Heart right ventricle (tissue), 16 donors: ENCODE measurements at regions of chr17 and their contacts with region 1.

Region 1: GRCh38 chr17:8300627-8301242 is 5.5 kb upstream of the SLC25A35 start:
- DNase-seq: peak; percentile 38 to 45
- ATAC-seq: peak; percentile 65 to 93 (median 91)
- H3K4me3 ChIP-seq: no peak overlapping the region
- H3K27ac ChIP-seq: no peak overlapping the region
- H3K4me1 ChIP-seq: peaks cover 0 to 13% (median 3%) of the 10 kb centered on the region in 9 donors
- H3K27me3 ChIP-seq: no peaks in the 10 kb centered on the region
- CTCF ChIP-seq: peak; percentile 76 to 90 (median 85)

Region 2: DNA sequence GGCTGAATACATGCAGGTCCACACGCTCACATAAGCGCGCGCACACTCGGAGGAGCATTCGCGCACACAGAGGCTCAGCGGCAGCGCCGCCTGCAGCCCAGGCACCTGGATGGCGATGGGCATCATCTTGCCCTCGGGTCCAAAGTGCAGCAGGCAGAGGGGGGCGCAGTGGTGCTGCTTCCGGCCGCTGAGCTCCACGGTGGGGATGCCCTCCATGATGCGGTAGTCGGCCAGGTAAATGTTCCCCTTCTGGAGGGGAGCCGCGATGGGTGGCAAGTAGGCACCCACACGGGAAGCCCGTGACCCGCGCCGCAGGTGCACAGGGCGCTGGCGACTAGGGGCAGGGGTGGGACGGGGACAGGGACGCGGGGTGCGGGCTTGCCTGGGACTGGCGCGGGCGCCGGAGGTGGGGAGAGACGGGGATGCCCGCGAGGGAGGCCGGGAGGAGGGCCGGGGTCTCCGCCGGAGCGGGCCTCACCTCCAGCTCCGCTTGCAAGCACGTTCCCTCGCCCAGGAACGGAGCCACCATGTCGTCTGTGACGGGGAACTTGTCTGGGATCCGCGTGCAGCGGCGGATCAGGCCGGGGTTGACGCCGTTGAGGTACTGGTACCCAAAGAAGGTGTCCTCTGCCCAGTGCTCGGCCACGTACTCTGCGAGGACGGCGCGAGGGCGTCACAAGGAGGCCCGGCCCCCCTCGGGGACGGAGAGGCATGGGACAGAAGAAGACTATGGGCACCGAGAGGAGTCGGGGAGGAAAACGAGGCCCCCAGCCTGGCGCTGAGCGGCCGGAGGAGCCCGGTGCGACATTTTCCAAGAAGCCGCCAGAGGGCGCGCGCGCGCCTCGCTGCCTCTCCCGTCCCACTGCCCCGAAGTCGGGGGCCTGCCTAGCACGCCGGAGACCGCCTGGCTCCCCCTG is 221.2 kb before region 1 on chr17:
- intact Hi-C with region 1: loop called in 5 of 10 experiments (anchors 5 to 10 kb)
- DNase-seq: peak; percentile 67 to 78
- ATAC-seq: peak; percentile 82 to 94 (median 92)
- H3K4me3 ChIP-seq: peak overlapping the region; percentile 14 to 56 (median 42)
- H3K27ac ChIP-seq: peak overlapping the region in 1 of 10 donors; percentile 53
- H3K4me1 ChIP-seq: peaks cover 3 to 19% (median 14%) of the 10 kb centered on the region in 9 donors
- H3K27me3 ChIP-seq: peaks cover 0 to 98% (median 90%) of the 10 kb centered on the region in 7 donors
- CTCF ChIP-seq: peak; percentile 83 to 96 (median 94)

Region 3: DNA sequence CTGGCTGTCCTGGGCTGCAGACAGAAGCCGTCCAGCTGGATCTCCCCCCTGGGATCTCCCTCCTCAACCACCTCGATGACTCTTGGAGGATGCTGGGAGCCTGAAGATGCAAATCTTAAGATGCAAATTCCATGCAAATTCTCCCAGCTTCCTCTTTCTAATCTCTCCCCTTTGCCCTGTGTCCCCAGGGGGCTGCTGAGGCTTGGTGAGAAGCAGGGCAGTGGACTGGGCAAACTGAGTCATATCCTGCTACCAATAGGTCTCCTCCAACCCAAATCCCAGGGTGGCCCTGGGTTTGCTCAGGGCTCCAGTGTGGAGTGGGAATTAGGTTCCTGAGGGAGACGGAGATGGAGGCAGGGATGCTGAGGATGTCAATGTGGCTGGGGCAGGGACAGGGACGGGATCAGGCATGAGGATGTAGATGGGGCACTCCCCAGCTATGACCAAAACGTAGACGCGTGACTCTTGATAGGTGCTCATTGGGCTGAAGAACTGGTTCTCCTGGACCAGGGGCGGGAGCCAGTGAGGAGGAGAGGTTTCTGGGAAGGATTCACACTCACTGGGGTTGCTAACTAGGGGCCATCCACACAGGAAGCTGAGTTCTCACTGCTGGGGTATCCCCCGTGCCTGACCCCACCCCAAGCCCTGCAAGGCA is 209.6 kb before region 1 on chr17:
- intact Hi-C with region 1: loop called in 6 of 10 experiments (anchors 10 kb)
- DNase-seq: no peak
- ATAC-seq: no peak
- H3K4me3 ChIP-seq: no peak overlapping the region
- H3K27ac ChIP-seq: no peak overlapping the region
- H3K4me1 ChIP-seq: no peaks in the 10 kb centered on the region
- H3K27me3 ChIP-seq: peaks cover 0 to 79% (median 48%) of the 10 kb centered on the region in 7 donors
- CTCF ChIP-seq: no peak